ENCODE measurements at regions of chr3 and their contacts with region 1.

Region 1: GRCh38 chr3:161035711-161036110 is 69.4 kb downstream of the B3GALNT1 start:
- DNase-seq: peak; percentile 82
- H3K4me3 ChIP-seq: peak overlapping the region in 1 of 3 experiments; percentile 48
- H3K27ac ChIP-seq: peak overlapping the region; percentile 74
- H3K4me1 ChIP-seq: peaks cover 21% of the 10 kb centered on the region
- H3K27me3 ChIP-seq: no peaks in the 10 kb centered on the region
- CTCF ChIP-seq: no peak
- POLR2A ChIP-seq: no peak

Region 2: DNA sequence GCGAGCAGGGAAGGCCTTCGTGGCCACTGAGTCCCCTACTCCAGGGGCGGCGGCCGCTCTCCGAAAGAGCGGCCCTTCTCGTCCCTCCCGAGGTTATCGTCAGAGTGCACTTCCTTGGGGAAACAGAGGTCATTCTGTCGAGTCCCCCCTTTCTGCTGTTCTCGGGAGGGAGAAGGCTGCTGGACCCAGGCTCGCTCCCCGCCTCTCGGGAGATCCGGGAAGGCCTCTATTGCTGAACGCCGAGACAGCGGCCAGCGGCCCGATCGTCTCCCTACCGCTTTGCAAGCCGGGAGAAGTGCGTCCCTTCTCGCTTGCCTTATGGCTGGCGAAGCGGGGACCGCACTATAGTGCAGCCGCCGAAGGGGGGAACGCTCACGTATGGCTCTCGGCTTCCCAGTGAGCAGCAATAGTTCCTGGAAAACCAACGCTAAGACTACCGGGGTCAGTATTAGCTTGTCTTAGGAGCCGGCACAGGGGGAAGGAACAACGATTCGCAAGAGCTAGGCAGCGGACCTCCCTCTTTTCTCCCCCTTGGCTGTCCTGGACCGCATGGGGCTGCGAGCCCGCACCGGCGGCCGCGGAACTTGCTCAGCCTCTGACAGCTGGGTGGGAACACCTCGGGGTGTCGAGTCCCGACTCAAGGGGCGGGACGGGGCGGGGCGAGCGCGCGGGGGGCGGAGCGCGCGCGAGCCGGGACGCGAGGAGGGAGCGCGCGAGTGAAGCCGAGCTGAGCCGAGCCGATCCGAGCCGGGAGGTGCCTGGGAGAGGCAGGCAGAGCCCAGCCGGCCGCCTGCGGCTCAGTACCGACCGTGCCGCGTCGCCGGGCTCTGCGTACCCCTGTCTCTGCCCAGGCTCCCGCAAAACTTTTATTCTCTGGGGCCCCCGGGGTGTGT is 280.6 kb before region 1 on chr3:
- CTCF ChIA-PET with region 1: no interaction called
- POLR2A ChIA-PET with region 1: no interaction called
- dilution Hi-C with region 1: no loop called
- intact Hi-C with region 1: loop called (anchors 2 kb)
- DNase-seq: peak; percentile 95
- H3K4me3 ChIP-seq: peak overlapping the region; percentile 49 to 80 (median 71)
- H3K27ac ChIP-seq: peak overlapping the region; percentile 84
- H3K4me1 ChIP-seq: peaks cover 8% of the 10 kb centered on the region
- H3K27me3 ChIP-seq: peaks cover 5 to 13% of the 10 kb centered on the region in 2 experiments
- CTCF ChIP-seq: no peak
- POLR2A ChIP-seq: no peak

Region 3: GRCh38 chr3:160968761-160969160 is 67.0 kb before region 1 on chr3:
- CTCF ChIA-PET with region 1: interaction called, 5 read pairs
- POLR2A ChIA-PET with region 1: no interaction called
- dilution Hi-C with region 1: no loop called
- intact Hi-C with region 1: loop called (anchors 1 kb)
- DNase-seq: no peak
- H3K4me3 ChIP-seq: no peak overlapping the region
- H3K27ac ChIP-seq: no peak overlapping the region
- H3K4me1 ChIP-seq: peaks cover 10% of the 10 kb centered on the region
- H3K27me3 ChIP-seq: no peaks in the 10 kb centered on the region
- CTCF ChIP-seq: no peak
- POLR2A ChIP-seq: no peak

Region 4: GRCh38 chr3:161069511-161070263 is 34.0 kb after region 1 on chr3:
- CTCF ChIA-PET with region 1: interaction called, 18 read pairs
- POLR2A ChIA-PET with region 1: interaction called, 11 read pairs
- dilution Hi-C with region 1: no loop called
- intact Hi-C with region 1: loop called (anchors 1 kb)
- DNase-seq: peak; percentile 98
- H3K4me3 ChIP-seq: no peak overlapping the region
- H3K27ac ChIP-seq: peak overlapping the region; percentile 70
- H3K4me1 ChIP-seq: peaks cover 29% of the 10 kb centered on the region
- H3K27me3 ChIP-seq: no peaks in the 10 kb centered on the region
- CTCF ChIP-seq: no peak
- POLR2A ChIP-seq: peak; percentile 43

Region 5: DNA sequence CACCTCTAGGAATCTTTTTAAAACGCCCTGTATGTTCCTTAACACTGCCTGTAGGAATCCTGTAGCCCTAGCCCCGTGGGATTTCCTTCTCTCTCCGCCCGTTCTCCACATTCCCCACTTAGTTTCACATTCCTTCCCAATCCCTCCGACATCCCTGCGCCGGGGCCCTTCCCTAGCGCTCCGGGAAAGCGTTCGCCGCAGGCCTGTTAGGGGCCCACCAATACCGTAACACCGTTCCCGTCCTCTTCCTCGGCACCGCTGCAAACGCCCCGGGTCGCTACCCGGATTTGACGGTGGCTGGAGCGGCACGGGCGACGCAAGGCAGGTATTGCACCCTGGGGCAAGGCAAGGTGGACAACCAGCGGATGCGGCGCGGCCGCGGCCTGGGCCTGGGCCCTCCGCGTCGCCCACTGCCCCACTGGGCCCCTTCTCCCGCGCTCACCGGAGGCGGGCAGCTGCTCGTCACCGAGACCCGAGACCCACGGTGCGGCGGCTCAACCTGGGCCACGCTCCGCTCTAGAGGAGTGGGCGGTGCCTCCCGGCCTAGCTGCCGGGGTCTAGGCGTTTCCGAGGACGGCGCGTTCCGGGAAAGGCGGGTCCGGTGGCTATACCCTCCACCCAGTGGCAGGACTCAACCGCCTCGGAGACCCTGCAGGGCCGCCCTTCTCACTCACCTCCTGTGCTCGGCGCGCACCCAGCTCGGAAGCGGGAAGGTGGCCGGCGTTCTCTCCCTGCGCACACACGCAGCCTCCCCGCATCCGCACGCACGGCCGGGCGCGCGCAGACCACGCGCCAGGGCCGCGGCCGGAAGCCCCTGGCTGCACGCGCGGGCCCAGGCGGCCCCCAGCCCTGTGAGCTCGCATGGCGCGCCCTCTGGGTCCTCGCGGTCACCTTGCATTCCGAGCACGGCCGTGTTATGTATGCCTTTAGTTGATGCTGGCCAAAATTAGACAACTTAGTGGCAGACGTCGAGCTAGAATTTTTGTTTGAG is 69.1 kb after region 1 on chr3 and contains the start of gene B3GALNT1:
- CTCF ChIA-PET with region 1: no interaction called
- POLR2A ChIA-PET with region 1: no interaction called
- dilution Hi-C with region 1: no loop called
- intact Hi-C with region 1: loop called (anchors 1 kb)
- DNase-seq: peak; percentile 69
- H3K4me3 ChIP-seq: peak within 1 kb of the TSS; percentile 27 to 84 (median 52)
- H3K27ac ChIP-seq: peak within 1 kb of the TSS; percentile 26
- H3K4me1 ChIP-seq: peaks cover 3% of the 10 kb centered on the region
- H3K27me3 ChIP-seq: no peaks in the 10 kb centered on the region
- CTCF ChIP-seq: peak in 1 of 2 donors; percentile 0
- POLR2A ChIP-seq: no peak
- total RNA-seq, gene B3GALNT1: 13.7 and 29.4 TPM in 2 replicates

Region 6: DNA sequence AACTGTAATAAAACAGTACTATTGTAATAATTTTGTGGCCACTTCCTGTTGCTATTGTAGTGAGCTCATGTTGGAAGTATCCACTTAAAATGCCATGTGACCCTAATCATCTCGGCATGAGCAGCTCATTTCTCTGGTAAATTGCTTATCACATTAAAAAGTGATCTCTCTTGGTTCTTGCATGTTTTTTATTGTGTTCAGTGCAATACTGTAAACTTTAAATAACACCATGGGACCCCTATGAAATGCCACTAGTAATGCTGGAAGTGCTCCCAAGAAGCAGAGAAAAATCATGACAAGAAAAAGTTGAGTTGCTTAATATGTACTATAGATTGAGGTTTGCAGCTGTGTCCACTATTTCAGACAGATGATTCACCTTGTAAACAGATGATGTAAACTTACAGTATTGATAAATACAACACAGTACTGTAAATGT is 231.0 kb after region 1 on chr3:
- CTCF ChIA-PET with region 1: no interaction called
- POLR2A ChIA-PET with region 1: no interaction called
- dilution Hi-C with region 1: no loop called
- intact Hi-C with region 1: loop called (anchors 5 kb)
- DNase-seq: peak; percentile 87
- H3K4me3 ChIP-seq: no peak overlapping the region
- H3K27ac ChIP-seq: peak overlapping the region; percentile 86
- H3K4me1 ChIP-seq: peaks cover 23% of the 10 kb centered on the region
- H3K27me3 ChIP-seq: no peaks in the 10 kb centered on the region
- CTCF ChIP-seq: no peak
- POLR2A ChIP-seq: no peak

Region 7: DNA sequence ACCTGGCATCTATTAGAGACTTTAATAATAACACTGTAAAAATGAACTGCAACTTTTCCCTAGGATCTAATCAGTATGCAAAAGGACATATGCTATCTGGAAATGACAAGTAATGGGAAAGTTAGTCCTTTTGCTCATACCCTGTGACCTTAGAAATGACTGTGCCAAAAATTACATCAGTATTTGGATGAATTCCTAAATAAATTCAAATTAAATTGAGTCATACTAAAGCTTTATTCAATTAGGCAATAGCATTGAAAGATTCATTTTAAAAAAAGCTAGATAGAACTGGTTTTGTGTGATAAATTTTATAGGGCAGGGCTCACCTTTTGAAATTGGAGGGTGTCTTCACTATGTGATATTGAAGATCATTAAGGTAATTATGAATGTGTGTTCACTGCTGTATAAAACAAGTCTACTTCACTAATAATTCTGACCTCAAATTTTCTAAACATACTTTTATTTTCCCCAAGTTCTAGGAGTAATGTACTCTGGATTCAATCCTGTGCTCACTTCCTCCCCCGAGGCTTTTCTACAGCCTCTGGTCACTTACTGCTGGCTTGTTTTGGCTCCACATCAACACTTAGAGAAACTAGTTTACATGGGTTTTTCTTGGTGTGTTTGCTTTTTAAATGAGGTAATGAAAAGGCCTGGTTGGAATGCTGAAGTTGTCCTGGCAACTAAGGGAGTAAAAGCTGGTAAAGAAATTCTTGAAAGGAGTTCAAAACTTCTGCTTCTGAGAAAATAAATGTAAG is 380.0 kb after region 1 on chr3:
- CTCF ChIA-PET with region 1: no interaction called
- POLR2A ChIA-PET with region 1: no interaction called
- dilution Hi-C with region 1: no loop called
- intact Hi-C with region 1: loop called (anchors 1 kb)
- DNase-seq: peak; percentile 93
- H3K4me3 ChIP-seq: peak overlapping the region in 1 of 3 experiments; percentile 10
- H3K27ac ChIP-seq: peak overlapping the region; percentile 97
- H3K4me1 ChIP-seq: peaks cover 19% of the 10 kb centered on the region
- H3K27me3 ChIP-seq: no peaks in the 10 kb centered on the region
- CTCF ChIP-seq: no peak
- POLR2A ChIP-seq: no peak

Region 8: DNA sequence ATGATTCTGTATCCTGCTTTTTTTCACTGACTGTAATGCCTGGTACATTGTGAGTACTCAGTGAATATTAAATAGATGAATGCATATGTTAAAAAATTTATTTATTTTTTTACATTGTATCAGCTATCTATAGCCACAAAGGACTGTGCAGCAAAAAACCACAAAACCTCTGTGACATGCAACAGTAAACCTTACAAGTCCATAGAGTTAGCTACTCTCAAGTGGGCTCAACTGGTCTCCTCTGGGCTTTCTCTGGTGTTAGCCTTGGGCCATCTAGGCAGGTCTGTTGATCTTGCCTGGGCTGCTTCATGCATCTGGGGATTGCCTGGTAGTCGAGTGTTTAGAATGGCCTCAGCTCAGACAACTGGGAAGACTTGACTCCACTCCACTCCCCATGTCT is 496.2 kb after region 1 on chr3:
- CTCF ChIA-PET with region 1: no interaction called
- POLR2A ChIA-PET with region 1: no interaction called
- dilution Hi-C with region 1: no loop called
- intact Hi-C with region 1: no loop called
- DNase-seq: no peak
- H3K4me3 ChIP-seq: no peak overlapping the region
- H3K27ac ChIP-seq: no peak overlapping the region
- H3K4me1 ChIP-seq: no peaks in the 10 kb centered on the region
- H3K27me3 ChIP-seq: no peaks in the 10 kb centered on the region
- CTCF ChIP-seq: no peak
- POLR2A ChIP-seq: no peak

Region 9: DNA sequence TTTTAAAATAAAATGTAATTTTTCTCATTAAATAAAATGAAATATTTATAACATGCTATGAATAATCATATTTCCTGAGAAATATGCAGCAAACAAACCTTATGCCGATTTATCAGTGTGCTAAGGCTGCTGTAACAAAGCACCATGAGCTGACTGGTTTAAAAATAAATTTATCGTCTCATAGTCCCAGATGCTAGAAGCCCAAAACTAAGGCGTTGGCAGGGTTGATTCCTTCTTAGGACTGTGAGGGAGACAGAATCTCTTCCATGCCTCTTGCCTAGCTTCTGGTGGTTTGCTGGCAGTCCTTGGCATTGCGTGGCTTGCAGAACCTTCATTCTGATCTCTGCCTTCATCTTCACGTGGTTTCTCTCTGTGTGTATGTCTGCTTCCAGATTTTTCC is 1201.2 kb after region 1 on chr3:
- CTCF ChIA-PET with region 1: no interaction called
- POLR2A ChIA-PET with region 1: no interaction called
- dilution Hi-C with region 1: no loop called
- intact Hi-C with region 1: no loop called
- DNase-seq: no peak
- H3K4me3 ChIP-seq: no peak overlapping the region
- H3K27ac ChIP-seq: no peak overlapping the region
- H3K4me1 ChIP-seq: no peaks in the 10 kb centered on the region
- H3K27me3 ChIP-seq: no peaks in the 10 kb centered on the region
- CTCF ChIP-seq: no peak
- POLR2A ChIP-seq: no peak